Adrenal gland (tissue), 19 donors: ENCODE measurements at regions of chr11 and their contacts with region 1.

Region 1: GRCh38 chr11:32953700-32954099 is 61.1 kb downstream of the QSER1 start:
- DNase-seq: no peak
- H3K4me3 ChIP-seq: no peak overlapping the region
- H3K27ac ChIP-seq: no peak overlapping the region
- H3K4me1 ChIP-seq: no peaks in the 10 kb centered on the region
- H3K27me3 ChIP-seq: no peaks in the 10 kb centered on the region
- CTCF ChIP-seq: no peak
- POLR2A ChIP-seq: no peak

Region 2: DNA sequence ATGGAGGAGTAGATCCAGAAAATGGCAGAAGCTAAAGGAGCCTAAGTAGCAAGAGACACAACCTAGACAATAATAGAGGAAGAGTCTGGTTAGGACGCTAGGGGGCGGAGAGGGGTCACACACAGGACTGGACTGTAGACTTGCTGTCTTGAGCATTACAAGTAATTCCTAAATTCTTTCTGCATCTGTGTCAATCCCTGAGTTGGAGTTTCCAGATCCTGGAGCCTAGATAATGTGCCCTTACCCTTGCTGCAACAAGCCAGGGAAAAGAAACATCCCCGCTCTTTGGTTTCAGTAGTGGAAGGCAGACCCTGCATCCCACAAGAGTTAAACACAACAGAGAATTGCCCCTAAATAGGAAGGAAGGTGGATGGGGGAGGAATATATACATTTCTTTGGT is 144.4 kb before region 1 on chr11:
- intact Hi-C with region 1: no loop called
- DNase-seq: peak; percentile 65 to 88 (median 79)
- H3K4me3 ChIP-seq: no peak overlapping the region
- H3K27ac ChIP-seq: no peak overlapping the region
- H3K4me1 ChIP-seq: no peaks in the 10 kb centered on the region
- H3K27me3 ChIP-seq: no peaks in the 10 kb centered on the region
- CTCF ChIP-seq: peak; percentile 43 to 68 (median 62)
- POLR2A ChIP-seq: no peak

Region 3: DNA sequence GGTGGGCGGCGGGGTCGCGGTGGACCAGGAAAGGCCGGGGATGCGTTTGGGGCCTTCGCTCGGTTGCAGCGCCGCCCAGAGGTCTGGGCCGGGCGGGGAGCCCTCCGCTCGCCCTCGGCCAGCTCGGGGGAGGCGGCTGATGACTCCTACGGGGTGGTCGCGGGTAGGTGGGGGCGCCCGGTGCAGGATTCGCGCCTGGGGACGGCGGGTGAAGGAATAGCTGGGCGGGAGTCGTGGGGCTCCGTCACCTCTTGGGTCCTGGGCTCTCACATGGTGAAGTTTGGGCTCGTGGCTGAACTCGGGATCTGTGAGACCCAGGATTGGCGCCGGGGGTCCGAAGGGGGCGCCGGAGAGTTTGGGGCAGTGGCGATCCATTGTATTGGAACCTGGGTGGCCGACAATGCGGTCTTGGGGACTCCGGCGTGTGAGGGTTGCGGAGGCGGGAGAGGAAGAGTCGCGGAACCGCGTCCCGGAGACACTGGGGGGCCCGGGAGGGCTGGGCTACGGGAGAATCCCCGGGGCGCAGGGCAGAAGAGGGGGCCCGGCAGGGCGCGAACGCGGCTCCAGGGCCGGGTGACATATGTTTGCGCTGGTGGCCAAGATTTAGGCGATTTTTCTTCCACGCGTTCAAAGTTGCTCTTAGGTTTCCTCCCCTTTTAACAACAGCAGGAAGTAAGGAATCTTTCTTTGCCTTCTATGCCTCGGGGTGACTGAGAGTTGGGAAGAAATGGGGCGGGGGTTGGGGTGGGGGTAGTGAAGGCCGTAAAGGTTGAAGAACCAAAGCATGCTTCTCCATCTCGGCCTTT is 60.2 kb before region 1 on chr11:
- intact Hi-C with region 1: loop called in 1 of 2 experiments (anchors 10 kb)
- DNase-seq: peak; percentile 34 to 63 (median 46)
- H3K4me3 ChIP-seq: peak overlapping the region; percentile 65 to 96 (median 93)
- H3K27ac ChIP-seq: peak overlapping the region in 4 of 5 donors; percentile 74 to 94 (median 90)
- H3K4me1 ChIP-seq: peaks cover 12 to 21% of the 10 kb centered on the region in 2 donors
- H3K27me3 ChIP-seq: no peaks in the 10 kb centered on the region
- CTCF ChIP-seq: peak in 5 of 6 experiments; percentile 19 to 34 (median 32)
- POLR2A ChIP-seq: no peak

Region 4: GRCh38 chr11:33116535-33116934 is 162.8 kb after region 1 on chr11:
- intact Hi-C with region 1: no loop called
- DNase-seq: no peak
- H3K4me3 ChIP-seq: no peak overlapping the region
- H3K27ac ChIP-seq: no peak overlapping the region
- H3K4me1 ChIP-seq: no peaks in the 10 kb centered on the region
- H3K27me3 ChIP-seq: no peaks in the 10 kb centered on the region
- CTCF ChIP-seq: no peak
- POLR2A ChIP-seq: no peak